ENCODE measurements at regions of chr4 and their contacts with region 1.

Region 1: DNA sequence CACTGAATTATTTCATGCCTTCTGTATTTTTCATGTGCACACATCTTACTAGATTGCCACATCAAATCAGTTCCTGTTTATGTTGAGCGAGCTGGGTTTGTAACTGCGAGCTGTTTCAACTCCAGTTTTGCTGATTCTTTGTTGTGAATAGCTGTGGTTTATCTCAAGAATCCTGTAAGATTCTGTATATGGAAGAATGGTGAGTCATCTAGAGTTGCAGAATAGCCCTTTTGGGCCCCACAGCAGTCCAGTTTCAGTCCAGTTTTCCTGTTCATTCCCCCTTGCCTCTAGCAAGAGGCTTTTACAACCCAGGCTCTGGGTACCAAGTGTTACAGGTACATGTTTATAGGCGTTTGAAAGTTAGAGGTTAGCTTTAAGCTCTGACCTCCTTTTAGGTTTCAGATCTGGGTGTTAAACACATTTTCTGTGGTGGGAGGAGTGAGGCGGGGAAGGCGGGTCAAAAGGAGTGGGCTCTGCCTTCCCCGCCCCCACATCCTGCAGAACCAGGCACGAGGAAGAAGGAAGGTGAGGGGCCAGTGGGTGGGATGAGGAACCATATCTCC is 32.7 kb downstream of the TBC1D14 start:
- DNase-seq: peak; percentile 83 to 96 (median 90)
- H3K4me3 ChIP-seq: peak overlapping the region in 1 of 3 experiments; percentile 62
- H3K4me3 Mint-ChIP-seq: peak overlapping the region; percentile 58 to 76
- H3K27ac ChIP-seq: peak overlapping the region; percentile 79 to 85
- H3K27ac Mint-ChIP-seq: peak overlapping the region; percentile 89 to 97 (median 96)
- H3K4me1 ChIP-seq: peaks cover 75 to 76% of the 10 kb centered on the region in 2 donors
- H3K4me1 Mint-ChIP-seq: peaks cover 79% of the 10 kb centered on the region
- H3K27me3 ChIP-seq: no peaks in the 10 kb centered on the region
- H3K27me3 Mint-ChIP-seq: peaks cover 0 to 7% (median 0%) of the 10 kb centered on the region in 3 donors
- CTCF ChIP-seq: no peak

Region 2: GRCh38 chr4:6892190-6892908 is 50.0 kb before region 1 on chr4:
- intact Hi-C with region 1: loop called in 1 of 2 experiments (anchors 5 kb)
- DNase-seq: peak; percentile 69 to 77 (median 73)
- H3K4me3 ChIP-seq: peak overlapping the region in 2 of 3 experiments; percentile 17 to 63
- H3K4me3 Mint-ChIP-seq: peak overlapping the region; percentile 63 to 77
- H3K27ac ChIP-seq: peak overlapping the region; percentile 80 to 88
- H3K27ac Mint-ChIP-seq: peak overlapping the region; percentile 94 to 99 (median 97)
- H3K4me1 ChIP-seq: peaks cover 67 to 73% of the 10 kb centered on the region in 2 donors
- H3K4me1 Mint-ChIP-seq: peaks cover 69% of the 10 kb centered on the region
- H3K27me3 ChIP-seq: no peaks in the 10 kb centered on the region
- H3K27me3 Mint-ChIP-seq: peaks cover 0 to 1% (median 1%) of the 10 kb centered on the region in 3 donors
- CTCF ChIP-seq: peak; percentile 9

Region 3: GRCh38 chr4:6909073-6909965 is 33.0 kb before region 1 on chr4 and contains the start of gene TBC1D14:
- intact Hi-C with region 1: loop called in 1 of 2 experiments (anchors 5 kb)
- DNase-seq: peak; percentile 72 to 78 (median 78)
- H3K4me3 ChIP-seq: peak within 1 kb of the TSS; percentile 77 to 94 (median 78)
- H3K4me3 Mint-ChIP-seq: peak within 1 kb of the TSS; percentile 96 to 97
- H3K27ac ChIP-seq: peak within 1 kb of the TSS; percentile 87 to 90
- H3K27ac Mint-ChIP-seq: peak within 1 kb of the TSS; percentile 86 to 96 (median 92)
- H3K4me1 ChIP-seq: peaks cover 49 to 53% of the 10 kb centered on the region in 2 donors
- H3K4me1 Mint-ChIP-seq: peaks cover 61% of the 10 kb centered on the region
- H3K27me3 ChIP-seq: no peaks in the 10 kb centered on the region
- H3K27me3 Mint-ChIP-seq: peaks cover 8 to 12% (median 11%) of the 10 kb centered on the region in 3 donors
- CTCF ChIP-seq: no peak
- polyA plus RNA-seq, gene TBC1D14: 36.3 to 44.7 (median 39.3) TPM

Region 4: GRCh38 chr4:6926681-6927478 is 15.4 kb before region 1 on chr4:
- intact Hi-C with region 1: loop called (anchors 2 kb)
- DNase-seq: no peak
- H3K4me3 ChIP-seq: peak overlapping the region in 1 of 3 experiments; percentile 65
- H3K4me3 Mint-ChIP-seq: peak overlapping the region; percentile 28 to 81
- H3K27ac ChIP-seq: peak overlapping the region; percentile 54 to 80
- H3K27ac Mint-ChIP-seq: peak overlapping the region; percentile 85 to 95 (median 91)
- H3K4me1 ChIP-seq: peaks cover 74% of the 10 kb centered on the region in 2 donors
- H3K4me1 Mint-ChIP-seq: peaks cover 91% of the 10 kb centered on the region
- H3K27me3 ChIP-seq: no peaks in the 10 kb centered on the region
- H3K27me3 Mint-ChIP-seq: no peaks in the 10 kb centered on the region
- CTCF ChIP-seq: no peak